CD4-positive, alpha-beta memory T cell (primary cell): ENCODE measurements at regions of chr4 and their contacts with region 1.

Region 1: DNA sequence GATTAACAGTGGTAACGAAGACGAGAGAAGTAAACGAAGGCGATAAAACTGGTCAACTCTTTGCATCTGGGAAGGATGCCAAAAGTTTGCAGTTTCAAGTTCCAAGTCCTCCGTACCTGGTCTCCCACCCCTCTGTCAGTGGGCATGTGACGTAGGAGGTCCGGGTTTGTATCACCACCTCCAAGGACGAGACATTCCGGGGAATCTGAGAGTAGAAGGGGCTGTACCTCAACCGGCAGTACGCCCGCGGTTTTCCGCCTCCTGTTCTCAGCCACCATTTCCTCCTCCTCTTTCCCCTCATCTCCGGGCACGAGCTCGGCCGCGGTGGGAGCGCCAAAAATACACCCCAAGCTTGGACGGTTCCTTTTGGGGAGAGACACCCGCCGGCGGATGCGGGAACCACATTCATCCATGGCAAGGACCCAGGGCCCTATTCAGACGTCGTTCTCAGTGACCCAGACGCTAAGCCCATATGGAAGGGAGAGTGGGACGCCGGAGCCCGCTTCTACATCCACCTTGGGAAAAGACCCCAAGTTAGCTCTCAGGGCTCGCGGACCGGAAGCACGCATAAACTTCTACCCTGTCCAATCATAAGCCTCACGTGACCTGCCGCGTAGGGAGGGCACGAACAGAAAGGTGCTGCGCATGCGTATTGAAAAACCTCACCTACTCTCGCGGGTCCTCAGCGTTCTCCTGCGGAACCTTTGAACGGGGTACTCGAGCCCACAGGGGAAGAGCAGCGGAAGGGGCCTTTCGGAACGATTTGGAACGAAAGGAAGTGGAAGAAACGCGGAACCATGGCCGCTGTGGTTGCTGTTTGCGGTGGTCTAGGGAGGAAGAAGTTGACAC is at the starts of genes HELQ and MRPS18C:
- DNase-seq: peak; percentile 94 to 98 (median 98)
- H3K4me3 ChIP-seq: peak within 1 kb of the TSS; percentile 90 to 96
- H3K4me3 Mint-ChIP-seq: peak within 1 kb of the TSS; percentile 99 to 100 (median 100)
- H3K27ac ChIP-seq: peak within 1 kb of the TSS; percentile 100
- H3K27ac Mint-ChIP-seq: peak within 1 kb of the TSS; percentile 100
- H3K4me1 ChIP-seq: peaks cover 37% of the 10 kb centered on the region
- H3K4me1 Mint-ChIP-seq: peaks cover 29 to 64% (median 42%) of the 10 kb centered on the region in 4 donors
- H3K27me3 ChIP-seq: no peaks in the 10 kb centered on the region
- H3K27me3 Mint-ChIP-seq: no peaks in the 10 kb centered on the region
- total RNA-seq, gene HELQ: 48.1 to 49.0 TPM
- total RNA-seq, gene MRPS18C: 45.7 to 51.4 TPM

Region 2: GRCh38 chr4:82373816-82374625 is 1081.5 kb before region 1 on chr4 and contains the start of gene HNRNPD:
- CTCF ChIA-PET with region 1: no interaction called
- POLR2A ChIA-PET with region 1: interaction called, 8 read pairs
- intact Hi-C with region 1: loop called (anchors 1 kb)
- DNase-seq: peak; percentile 91 to 96 (median 95)
- H3K4me3 ChIP-seq: peak within 1 kb of the TSS; percentile 95 to 96
- H3K4me3 Mint-ChIP-seq: peak within 1 kb of the TSS; percentile 96 to 100 (median 98)
- H3K27ac ChIP-seq: peak within 1 kb of the TSS; percentile 98
- H3K27ac Mint-ChIP-seq: peak within 1 kb of the TSS; percentile 98 to 100 (median 99)
- H3K4me1 ChIP-seq: peaks cover 53% of the 10 kb centered on the region
- H3K4me1 Mint-ChIP-seq: peaks cover 32 to 67% (median 48%) of the 10 kb centered on the region in 4 donors
- H3K27me3 ChIP-seq: no peaks in the 10 kb centered on the region
- H3K27me3 Mint-ChIP-seq: peaks cover 0 to 2% of the 10 kb centered on the region in 2 donors
- total RNA-seq, gene HNRNPD: 234 to 247 TPM

Region 3: DNA sequence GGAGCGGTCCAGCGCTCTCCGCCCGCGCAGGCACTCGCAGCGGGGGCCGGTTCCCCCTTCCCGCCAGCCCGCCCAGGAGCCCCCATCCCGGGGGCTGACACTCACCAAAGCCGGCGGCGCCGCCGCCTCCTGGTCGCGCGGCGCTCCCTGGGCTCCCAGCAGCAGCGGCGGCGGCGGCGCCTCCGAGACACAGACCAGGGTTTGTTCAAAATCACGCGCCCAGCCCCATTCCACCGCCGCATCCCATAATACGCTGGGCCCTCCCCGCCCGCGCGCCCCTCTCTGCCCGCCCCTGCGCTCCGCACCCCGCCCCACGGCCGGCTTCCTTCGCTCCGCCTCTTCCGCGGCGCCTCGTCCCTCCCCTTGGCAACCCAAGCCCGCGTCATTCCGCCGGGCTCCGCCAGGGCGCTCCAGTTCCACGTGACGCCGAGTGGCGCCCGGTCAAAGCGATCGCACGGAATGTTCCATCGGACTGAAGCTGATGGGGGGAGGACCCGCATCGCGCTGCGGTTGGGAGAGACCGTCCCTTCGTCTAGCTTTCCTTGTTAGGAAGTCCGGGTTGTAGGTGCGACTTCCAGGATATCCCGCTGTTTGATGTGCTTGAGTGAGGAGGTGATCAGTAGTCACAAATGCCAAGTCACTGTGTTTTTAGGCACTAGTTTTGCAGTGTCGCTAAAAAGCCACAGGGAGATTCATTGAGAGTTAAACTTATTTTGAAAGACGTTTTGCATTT is 442.7 kb before region 1 on chr4:
- CTCF ChIA-PET with region 1: no interaction called
- POLR2A ChIA-PET with region 1: interaction called, 6 read pairs
- intact Hi-C with region 1: loop called (anchors 1 kb)
- DNase-seq: peak; percentile 96 to 99 (median 97)
- H3K4me3 ChIP-seq: peak overlapping the region; percentile 88 to 98
- H3K4me3 Mint-ChIP-seq: peak overlapping the region; percentile 91 to 97 (median 95)
- H3K27ac ChIP-seq: peak overlapping the region; percentile 89
- H3K27ac Mint-ChIP-seq: peak overlapping the region; percentile 87 to 97 (median 94)
- H3K4me1 ChIP-seq: peaks cover 43% of the 10 kb centered on the region
- H3K4me1 Mint-ChIP-seq: peaks cover 33 to 52% (median 39%) of the 10 kb centered on the region in 4 donors
- H3K27me3 ChIP-seq: no peaks in the 10 kb centered on the region
- H3K27me3 Mint-ChIP-seq: no peaks in the 10 kb centered on the region

Region 4: GRCh38 chr4:83334425-83335241 is 120.9 kb before region 1 on chr4 and contains the start of gene HPSE:
- CTCF ChIA-PET with region 1: interaction called, 3 read pairs
- POLR2A ChIA-PET with region 1: no interaction called
- intact Hi-C with region 1: loop called (anchors 10 kb)
- DNase-seq: peak; percentile 67 to 74 (median 70)
- H3K4me3 ChIP-seq: peak within 1 kb of the TSS; percentile 56 to 80
- H3K4me3 Mint-ChIP-seq: peak within 1 kb of the TSS; percentile 90 to 97 (median 94)
- H3K27ac ChIP-seq: peak within 1 kb of the TSS; percentile 51
- H3K27ac Mint-ChIP-seq: peak within 1 kb of the TSS; percentile 81 to 93 (median 89)
- H3K4me1 ChIP-seq: peaks cover 23% of the 10 kb centered on the region
- H3K4me1 Mint-ChIP-seq: peaks cover 19 to 38% (median 33%) of the 10 kb centered on the region in 4 donors
- H3K27me3 ChIP-seq: no peaks in the 10 kb centered on the region
- H3K27me3 Mint-ChIP-seq: peaks cover 0 to 1% of the 10 kb centered on the region in 2 donors
- total RNA-seq, gene HPSE: 8.9 TPM

Region 5: GRCh38 chr4:83484500-83485461 is 29.3 kb after region 1 on chr4 and contains the start of gene ABRAXAS1:
- CTCF ChIA-PET with region 1: interaction called, 4 read pairs
- POLR2A ChIA-PET with region 1: interaction called, 62 read pairs
- intact Hi-C with region 1: loop called (anchors 1 kb)
- DNase-seq: peak; percentile 93 to 96 (median 95)
- H3K4me3 ChIP-seq: peak within 1 kb of the TSS; percentile 67 to 79
- H3K4me3 Mint-ChIP-seq: peak within 1 kb of the TSS; percentile 91 to 100 (median 96)
- H3K27ac ChIP-seq: peak within 1 kb of the TSS; percentile 68
- H3K27ac Mint-ChIP-seq: peak within 1 kb of the TSS; percentile 95 to 98 (median 97)
- H3K4me1 ChIP-seq: peaks cover 23% of the 10 kb centered on the region
- H3K4me1 Mint-ChIP-seq: peaks cover 18 to 36% (median 27%) of the 10 kb centered on the region in 4 donors
- H3K27me3 ChIP-seq: no peaks in the 10 kb centered on the region
- H3K27me3 Mint-ChIP-seq: peaks cover 0 to 2% of the 10 kb centered on the region in 2 donors
- total RNA-seq, gene ABRAXAS1: 35.9 to 36.7 TPM

Region 6: GRCh38 chr4:83510442-83510841 is 54.9 kb after region 1 on chr4:
- CTCF ChIA-PET with region 1: no interaction called
- POLR2A ChIA-PET with region 1: no interaction called
- intact Hi-C with region 1: no loop called
- DNase-seq: no peak
- H3K4me3 ChIP-seq: no peak overlapping the region
- H3K4me3 Mint-ChIP-seq: no peak overlapping the region
- H3K27ac ChIP-seq: no peak overlapping the region
- H3K27ac Mint-ChIP-seq: no peak overlapping the region
- H3K4me1 ChIP-seq: no peaks in the 10 kb centered on the region
- H3K4me1 Mint-ChIP-seq: peaks cover 0 to 3% (median 1%) of the 10 kb centered on the region in 4 donors
- H3K27me3 ChIP-seq: no peaks in the 10 kb centered on the region
- H3K27me3 Mint-ChIP-seq: no peaks in the 10 kb centered on the region